ENCODE measurements at regions of chr7 and their contacts with region 1.

Region 1: GRCh38 chr7:29748286-29749108 is 57.8 kb upstream of the WIPF3 start:
- DNase-seq: no peak
- ATAC-seq: peak in 3 of 4 donors; percentile 65 to 80 (median 75)
- H3K4me3 ChIP-seq: no peak overlapping the region
- H3K27ac ChIP-seq: peak overlapping the region in 1 of 12 donors; percentile 57
- H3K4me1 ChIP-seq: peaks cover 0 to 7% (median 0%) of the 10 kb centered on the region in 12 donors
- H3K27me3 ChIP-seq: no peaks in the 10 kb centered on the region
- CTCF ChIP-seq: peak; percentile 44 to 80 (median 64)
- POLR2A ChIP-seq: no peak

Region 2: GRCh38 chr7:29622335-29623265 is 125.9 kb before region 1 on chr7:
- intact Hi-C with region 1: loop called in 1 of 10 experiments (anchors 10 kb)
- DNase-seq: no peak
- ATAC-seq: peak in 3 of 4 donors; percentile 30 to 62 (median 50)
- H3K4me3 ChIP-seq: no peak overlapping the region
- H3K27ac ChIP-seq: no peak overlapping the region
- H3K4me1 ChIP-seq: no peaks in the 10 kb centered on the region
- H3K27me3 ChIP-seq: peaks cover 0 to 9% (median 0%) of the 10 kb centered on the region in 9 donors
- CTCF ChIP-seq: no peak
- POLR2A ChIP-seq: no peak

Region 3: DNA sequence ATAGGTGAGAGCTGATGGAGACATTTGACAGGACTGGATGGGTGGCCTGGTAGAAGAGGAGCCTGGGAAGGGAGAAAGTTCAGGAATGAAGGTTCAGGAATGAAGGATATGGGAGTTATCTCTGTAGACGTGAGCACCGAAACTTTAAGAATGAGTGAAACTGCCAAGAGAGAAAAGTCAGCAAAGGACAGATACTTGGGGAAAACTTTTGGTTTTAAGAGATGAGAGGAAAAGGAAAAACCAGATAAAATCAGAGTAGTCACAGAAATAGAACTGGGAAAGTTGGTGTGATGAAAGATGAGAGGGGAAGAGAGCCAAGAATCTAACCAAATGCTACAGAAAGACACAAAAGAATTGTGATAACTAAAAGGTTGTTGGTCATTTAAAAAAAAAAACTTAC is 95.9 kb before region 1 on chr7:
- intact Hi-C with region 1: loop called in 1 of 10 experiments (anchors 5 kb)
- DNase-seq: no peak
- ATAC-seq: no peak
- H3K4me3 ChIP-seq: no peak overlapping the region
- H3K27ac ChIP-seq: no peak overlapping the region
- H3K4me1 ChIP-seq: peaks cover 0 to 23% (median 1%) of the 10 kb centered on the region in 12 donors
- H3K27me3 ChIP-seq: no peaks in the 10 kb centered on the region
- CTCF ChIP-seq: no peak
- POLR2A ChIP-seq: no peak

Region 4: GRCh38 chr7:29878081-29878688 is 129.7 kb after region 1 on chr7:
- intact Hi-C with region 1: loop called in 1 of 10 experiments (anchors 5 kb)
- DNase-seq: no peak
- ATAC-seq: no peak
- H3K4me3 ChIP-seq: no peak overlapping the region
- H3K27ac ChIP-seq: no peak overlapping the region
- H3K4me1 ChIP-seq: peaks cover 0 to 9% (median 0%) of the 10 kb centered on the region in 12 donors
- H3K27me3 ChIP-seq: no peaks in the 10 kb centered on the region
- CTCF ChIP-seq: peak in 11 of 12 donors; percentile 7 to 58 (median 39)
- POLR2A ChIP-seq: no peak

Region 5: DNA sequence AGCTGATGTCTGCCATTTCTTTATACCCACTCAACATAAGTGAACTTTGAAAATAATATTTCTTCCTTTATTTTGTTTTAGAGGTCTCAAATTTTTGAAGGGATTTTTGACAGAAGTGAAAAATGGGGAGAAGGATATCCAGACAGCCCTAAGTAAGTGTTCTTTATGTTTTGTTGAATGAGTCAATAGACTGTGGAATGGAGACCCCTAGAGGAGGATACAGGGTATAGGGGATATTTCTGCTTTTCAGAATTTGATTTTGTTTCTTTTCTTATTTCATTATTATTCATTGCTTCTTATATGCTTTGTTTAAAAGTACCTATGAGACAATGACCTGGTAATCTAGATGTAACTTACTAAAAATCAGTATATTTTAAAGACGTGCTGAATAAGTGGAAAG is 314.1 kb after region 1 on chr7:
- intact Hi-C with region 1: loop called in 3 of 10 experiments (anchors 5 kb)
- DNase-seq: no peak
- ATAC-seq: peak in 2 of 4 donors; percentile 65
- H3K4me3 ChIP-seq: no peak overlapping the region
- H3K27ac ChIP-seq: no peak overlapping the region
- H3K4me1 ChIP-seq: peaks cover 0 to 11% (median 0%) of the 10 kb centered on the region in 12 donors
- H3K27me3 ChIP-seq: no peaks in the 10 kb centered on the region
- CTCF ChIP-seq: peak; percentile 37 to 72 (median 54)
- POLR2A ChIP-seq: no peak

Measured in heart left ventricle (tissue), 16 donors.